Heart right ventricle (tissue), 16 donors: ENCODE measurements at regions of chr2 and their contacts with region 1.

Region 1: GRCh38 chr2:9326975-9327374 is 96.4 kb downstream of the ITGB1BP1 start:
- DNase-seq: no peak
- ATAC-seq: peak in 1 of 8 donors; percentile 32
- H3K4me3 ChIP-seq: no peak overlapping the region
- H3K27ac ChIP-seq: peak overlapping the region in 4 of 10 donors; percentile 13 to 54 (median 24)
- H3K4me1 ChIP-seq: peaks cover 0 to 53% (median 32%) of the 10 kb centered on the region in 9 donors
- H3K27me3 ChIP-seq: no peaks in the 10 kb centered on the region
- CTCF ChIP-seq: no peak

Region 2: GRCh38 chr2:9199716-9200632 is 127.0 kb before region 1 on chr2:
- intact Hi-C with region 1: loop called in 6 of 10 experiments (anchors 5 kb)
- DNase-seq: no peak
- ATAC-seq: no peak
- H3K4me3 ChIP-seq: no peak overlapping the region
- H3K27ac ChIP-seq: no peak overlapping the region
- H3K4me1 ChIP-seq: no peaks in the 10 kb centered on the region
- H3K27me3 ChIP-seq: no peaks in the 10 kb centered on the region
- CTCF ChIP-seq: no peak

Region 3: DNA sequence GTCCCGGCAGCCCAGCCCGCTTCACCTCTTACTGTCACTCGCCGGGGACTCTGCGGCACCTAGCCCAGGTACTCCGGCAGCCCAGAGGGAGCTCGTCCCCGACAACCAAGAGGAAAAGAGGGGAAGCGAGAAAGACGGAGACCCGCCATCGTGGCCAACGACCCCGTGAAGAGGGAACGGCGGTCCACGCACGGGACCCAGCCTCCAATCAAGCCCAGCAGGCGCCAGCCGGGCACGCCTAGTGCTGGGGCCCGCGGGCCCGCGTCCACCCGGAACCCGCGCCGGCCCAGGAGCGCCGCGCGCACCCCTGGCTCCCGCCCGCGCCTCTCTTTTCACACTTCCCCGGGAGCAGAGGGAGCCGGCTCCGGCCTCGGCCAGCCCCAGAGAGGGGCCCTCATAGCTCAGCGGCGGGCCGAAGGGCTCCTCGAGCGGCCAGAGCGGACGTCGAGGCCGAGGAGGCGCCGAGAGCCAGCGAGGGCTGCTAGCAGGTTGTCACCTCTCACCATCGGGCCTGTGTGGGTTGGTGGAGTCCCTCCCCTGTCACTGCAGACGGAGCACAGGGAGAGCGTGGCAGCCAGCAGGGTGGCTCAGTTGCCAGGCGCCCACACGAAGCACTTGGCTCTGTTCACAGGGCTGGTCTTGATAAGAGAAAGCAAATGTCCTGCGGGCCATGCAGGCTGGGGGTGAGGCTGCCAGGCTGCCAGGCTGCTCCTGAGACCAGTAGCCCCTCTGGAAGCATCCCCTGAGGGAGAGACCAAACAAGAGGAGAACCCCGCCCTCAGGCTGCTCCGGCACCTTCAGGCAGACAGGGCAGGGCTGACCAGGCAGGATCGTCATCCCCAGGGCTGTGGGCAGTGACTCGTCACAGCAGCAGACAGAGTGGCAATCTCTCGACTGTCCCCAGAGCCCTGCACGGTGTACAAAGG is 679.5 kb after region 1 on chr2:
- intact Hi-C with region 1: no loop called
- DNase-seq: peak; percentile 63 to 69
- ATAC-seq: peak; percentile 57 to 85 (median 70)
- H3K4me3 ChIP-seq: peak overlapping the region in 4 of 10 donors; percentile 19 to 33 (median 24)
- H3K27ac ChIP-seq: peak overlapping the region; percentile 27 to 79 (median 74)
- H3K4me1 ChIP-seq: peaks cover 21 to 54% (median 40%) of the 10 kb centered on the region in 9 donors
- H3K27me3 ChIP-seq: peaks cover 0 to 16% (median 0%) of the 10 kb centered on the region in 7 donors
- CTCF ChIP-seq: no peak

Region 4: GRCh38 chr2:10457911-10458604 is 1131.1 kb after region 1 on chr2:
- intact Hi-C with region 1: no loop called
- DNase-seq: no peak
- ATAC-seq: no peak
- H3K4me3 ChIP-seq: no peak overlapping the region
- H3K27ac ChIP-seq: peak overlapping the region in 1 of 10 donors; percentile 15
- H3K4me1 ChIP-seq: peaks cover 0 to 24% (median 9%) of the 10 kb centered on the region in 9 donors
- H3K27me3 ChIP-seq: no peaks in the 10 kb centered on the region
- CTCF ChIP-seq: no peak